MCF 10A (cell line): ENCODE measurements at regions of chr5 and their contacts with region 1.

Region 1: DNA sequence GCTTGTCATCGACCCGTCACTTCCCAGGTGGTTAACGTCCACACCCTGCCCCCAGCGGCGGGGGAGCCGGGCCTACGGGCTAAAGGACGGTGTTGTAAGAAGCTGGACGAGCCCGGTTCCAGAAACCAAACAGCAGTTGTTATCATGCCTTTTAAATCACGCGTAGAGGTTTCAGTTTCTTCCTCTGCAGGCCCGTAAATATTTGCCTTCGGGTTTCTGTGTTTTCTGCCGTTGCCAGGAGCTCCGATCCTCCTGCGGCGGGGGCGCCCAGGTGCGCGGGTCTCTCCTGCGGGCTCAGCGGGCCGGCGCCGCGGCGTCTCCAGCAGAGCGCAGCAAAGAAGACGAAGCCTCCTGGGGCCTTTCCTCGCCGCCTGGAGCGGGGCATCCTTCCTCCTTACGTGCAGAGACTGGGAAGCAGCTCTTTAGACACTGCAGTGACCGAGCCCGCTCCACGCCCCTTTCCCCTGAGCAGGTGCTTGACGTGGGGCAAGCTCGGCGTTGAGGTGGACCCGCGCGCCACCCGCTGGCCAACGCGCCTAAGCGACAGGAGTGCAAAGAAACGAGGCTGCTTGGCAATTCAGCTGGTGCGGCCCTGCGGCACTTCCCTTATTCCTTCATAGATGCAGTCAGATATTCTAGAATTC is 21.8 kb upstream of the TTC1 start:
- DNase-seq: peak; percentile 85
- H3K4me3 Mint-ChIP-seq: peak overlapping the region; percentile 13
- H3K27ac Mint-ChIP-seq: no peak overlapping the region
- H3K4me1 Mint-ChIP-seq: peaks cover 12% of the 10 kb centered on the region
- H3K27me3 Mint-ChIP-seq: no peaks in the 10 kb centered on the region
- CTCF ChIP-seq: peak; percentile 98

Region 2: GRCh38 chr5:159156426-159157238 is 830.5 kb before region 1 on chr5:
- CTCF ChIA-PET with region 1: interaction called, 7 read pairs
- POLR2A ChIA-PET with region 1: no interaction called
- intact Hi-C with region 1: loop called (anchors 5 kb)
- DNase-seq: peak; percentile 87
- H3K4me3 Mint-ChIP-seq: no peak overlapping the region
- H3K27ac Mint-ChIP-seq: peak overlapping the region; percentile 28
- H3K4me1 Mint-ChIP-seq: peaks cover 12% of the 10 kb centered on the region
- H3K27me3 Mint-ChIP-seq: no peaks in the 10 kb centered on the region
- CTCF ChIP-seq: peak; percentile 88

Region 3: GRCh38 chr5:159331093-159331973 is 655.8 kb before region 1 on chr5:
- CTCF ChIA-PET with region 1: no interaction called
- POLR2A ChIA-PET with region 1: no interaction called
- intact Hi-C with region 1: loop called (anchors 5 kb)
- DNase-seq: peak; percentile 49
- H3K4me3 Mint-ChIP-seq: peak overlapping the region; percentile 73
- H3K27ac Mint-ChIP-seq: peak overlapping the region; percentile 80
- H3K4me1 Mint-ChIP-seq: peaks cover 30% of the 10 kb centered on the region
- H3K27me3 Mint-ChIP-seq: no peaks in the 10 kb centered on the region
- CTCF ChIP-seq: peak; percentile 80

Region 4: DNA sequence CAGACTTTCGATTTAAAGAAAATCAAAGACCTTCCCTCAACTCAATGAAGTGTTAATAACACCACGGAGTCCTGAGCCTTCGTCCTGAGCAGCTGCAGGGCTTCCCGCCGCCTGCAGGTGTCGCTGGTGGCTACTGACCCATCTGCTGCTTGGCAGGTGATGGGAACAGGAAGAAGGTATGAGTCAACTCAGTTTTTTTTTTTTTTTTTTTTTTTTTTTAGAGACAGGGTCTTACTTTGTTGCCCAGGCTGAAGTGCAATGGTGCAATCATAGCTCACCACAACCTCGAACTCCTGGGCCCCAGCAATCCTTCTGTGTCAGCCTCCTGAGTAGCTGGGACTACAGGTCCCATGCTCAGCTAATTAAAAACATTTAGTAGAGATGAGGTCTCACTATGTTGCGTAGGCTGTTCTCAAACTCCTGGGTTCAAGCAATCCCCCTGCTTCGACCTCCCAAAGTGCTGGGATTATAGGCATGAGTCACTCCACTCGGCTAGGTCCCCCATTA is 471.2 kb before region 1 on chr5:
- CTCF ChIA-PET with region 1: interaction called, 83 read pairs
- POLR2A ChIA-PET with region 1: interaction called, 5 read pairs
- intact Hi-C with region 1: loop called (anchors 1 kb)
- DNase-seq: peak; percentile 88
- H3K4me3 Mint-ChIP-seq: no peak overlapping the region
- H3K27ac Mint-ChIP-seq: no peak overlapping the region
- H3K4me1 Mint-ChIP-seq: peaks cover 19% of the 10 kb centered on the region
- H3K27me3 Mint-ChIP-seq: no peaks in the 10 kb centered on the region
- CTCF ChIP-seq: peak; percentile 97

Region 5: GRCh38 chr5:159773062-159773924 is 213.9 kb before region 1 on chr5:
- CTCF ChIA-PET with region 1: interaction called, 4 read pairs
- POLR2A ChIA-PET with region 1: no interaction called
- intact Hi-C with region 1: loop called (anchors 5 kb)
- DNase-seq: peak; percentile 93
- H3K4me3 Mint-ChIP-seq: peak overlapping the region; percentile 58
- H3K27ac Mint-ChIP-seq: no peak overlapping the region
- H3K4me1 Mint-ChIP-seq: peaks cover 8% of the 10 kb centered on the region
- H3K27me3 Mint-ChIP-seq: no peaks in the 10 kb centered on the region
- CTCF ChIP-seq: no peak

Region 6: GRCh38 chr5:159965031-159965837 is 21.9 kb before region 1 on chr5:
- CTCF ChIA-PET with region 1: interaction called, 33 read pairs
- POLR2A ChIA-PET with region 1: no interaction called
- intact Hi-C with region 1: no loop called
- DNase-seq: peak; percentile 86
- H3K4me3 Mint-ChIP-seq: no peak overlapping the region
- H3K27ac Mint-ChIP-seq: no peak overlapping the region
- H3K4me1 Mint-ChIP-seq: peaks cover 7% of the 10 kb centered on the region
- H3K27me3 Mint-ChIP-seq: no peaks in the 10 kb centered on the region
- CTCF ChIP-seq: peak; percentile 87

Region 7: DNA sequence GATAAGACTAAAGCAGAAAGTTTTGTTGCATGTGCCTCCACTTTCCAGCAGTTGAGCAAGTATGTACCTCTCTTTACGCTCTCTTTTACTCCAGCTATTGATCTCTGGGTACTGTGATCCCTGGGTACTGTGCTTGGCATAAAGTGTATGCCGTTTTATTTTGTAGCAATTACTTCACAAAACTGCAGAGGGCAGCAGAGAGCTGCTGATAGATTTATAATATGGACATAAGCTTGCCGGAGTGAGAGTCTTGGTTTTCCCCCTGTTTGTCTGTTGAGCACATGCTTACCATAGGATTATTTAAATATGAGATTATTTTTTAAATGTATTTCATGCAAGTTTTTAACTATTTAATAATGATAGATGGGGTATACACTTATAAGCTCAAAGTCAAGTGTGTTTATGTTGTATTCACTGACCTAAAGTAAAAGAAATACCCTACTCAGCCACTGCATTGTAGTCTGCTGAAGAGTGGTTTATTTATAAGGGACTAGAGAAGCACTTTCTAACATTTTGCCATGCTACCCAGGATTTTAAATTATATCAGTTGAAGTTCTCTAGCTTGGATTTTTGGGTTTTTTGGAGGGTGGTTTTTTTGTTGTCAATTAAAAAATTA is 34.8 kb after region 1 on chr5:
- CTCF ChIA-PET with region 1: interaction called, 11 read pairs
- POLR2A ChIA-PET with region 1: no interaction called
- intact Hi-C with region 1: no loop called
- DNase-seq: peak; percentile 81
- H3K4me3 Mint-ChIP-seq: no peak overlapping the region
- H3K27ac Mint-ChIP-seq: no peak overlapping the region
- H3K4me1 Mint-ChIP-seq: peaks cover 13% of the 10 kb centered on the region
- H3K27me3 Mint-ChIP-seq: no peaks in the 10 kb centered on the region
- CTCF ChIP-seq: peak; percentile 82